CD4-positive, alpha-beta memory T cell (primary cell): ENCODE measurements at regions of chr11 and their contacts with region 1.

Region 1: DNA sequence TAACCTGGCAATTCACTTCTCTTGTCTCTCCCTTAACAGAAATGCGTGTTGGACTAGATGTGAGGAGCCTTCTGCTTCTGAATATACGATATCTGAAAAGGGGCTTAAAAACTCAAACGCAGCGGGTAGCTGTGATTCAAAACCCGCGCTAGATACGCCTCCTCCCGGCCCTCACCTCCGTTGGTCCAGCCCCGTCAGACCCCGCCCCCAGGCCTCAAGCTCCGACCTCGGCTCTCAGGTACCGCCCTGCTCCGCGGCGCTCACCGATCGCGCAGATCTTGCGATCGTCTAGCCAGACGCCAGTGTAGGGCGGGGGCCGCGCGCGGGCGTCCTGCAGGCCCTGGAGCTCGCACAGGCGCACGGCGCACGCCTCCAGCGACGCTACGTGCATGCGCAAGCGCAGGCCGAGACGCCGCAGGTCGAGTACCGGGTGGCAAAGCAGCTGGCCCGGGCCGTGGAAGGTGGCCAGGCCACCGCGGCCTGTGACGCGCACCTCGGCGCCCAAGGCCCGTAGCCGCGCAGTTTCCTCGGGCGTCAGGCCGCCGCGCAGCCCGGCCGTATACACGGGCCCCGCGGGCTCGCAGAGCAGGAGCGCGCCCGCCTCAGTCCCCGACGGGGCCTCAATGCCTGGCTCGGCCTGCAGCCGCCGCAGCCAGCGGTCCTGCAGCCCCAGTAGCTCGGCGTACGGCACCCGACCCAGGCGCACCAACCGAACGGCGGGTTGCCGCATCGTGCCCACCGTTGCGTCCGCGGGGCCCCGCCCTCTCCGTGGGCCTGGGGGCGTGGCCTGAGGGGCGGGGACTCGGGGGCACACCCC is at the start of gene LIPT2:
- DNase-seq: peak; percentile 95 to 98 (median 97)
- H3K4me3 ChIP-seq: peak within 1 kb of the TSS; percentile 39 to 84
- H3K4me3 Mint-ChIP-seq: peak within 1 kb of the TSS; percentile 87 to 93 (median 88)
- H3K27ac ChIP-seq: peak within 1 kb of the TSS; percentile 94
- H3K27ac Mint-ChIP-seq: peak within 1 kb of the TSS; percentile 73 to 96 (median 93)
- H3K4me1 ChIP-seq: peaks cover 12% of the 10 kb centered on the region
- H3K4me1 Mint-ChIP-seq: peaks cover 9 to 32% (median 20%) of the 10 kb centered on the region in 4 donors
- H3K27me3 ChIP-seq: no peaks in the 10 kb centered on the region
- H3K27me3 Mint-ChIP-seq: no peaks in the 10 kb centered on the region
- total RNA-seq, gene LIPT2: 8.0 to 15.5 TPM

Region 2: DNA sequence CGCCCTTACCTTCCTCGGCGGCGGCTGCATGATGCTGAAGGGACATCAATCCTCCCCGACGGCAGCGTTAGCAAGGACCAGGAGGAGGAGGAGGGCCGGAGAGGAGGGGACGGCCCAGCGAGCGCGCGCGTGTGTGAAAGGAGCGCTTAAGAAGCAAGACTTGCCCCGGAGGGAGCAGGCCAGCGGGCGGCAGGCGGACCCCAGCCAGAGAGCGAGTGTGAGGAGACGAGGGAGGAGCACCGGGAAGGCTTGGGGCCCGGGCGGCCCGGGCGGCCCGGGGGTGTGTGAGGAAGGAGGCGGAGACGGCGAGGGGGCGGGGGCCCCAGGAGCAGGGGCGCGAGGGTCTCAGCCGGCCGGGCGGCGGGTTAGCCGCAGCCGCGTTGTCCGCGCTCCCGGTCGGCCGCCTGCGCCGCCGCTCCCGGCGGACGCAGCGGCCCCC is 1351.3 kb before region 1 on chr11:
- CTCF ChIA-PET with region 1: no interaction called
- POLR2A ChIA-PET with region 1: no interaction called
- intact Hi-C with region 1: loop called (anchors 5 kb)
- DNase-seq: peak in 1 of 5 donors; percentile 78
- H3K4me3 ChIP-seq: peak overlapping the region; percentile 80 to 94
- H3K4me3 Mint-ChIP-seq: peak overlapping the region; percentile 92 to 98 (median 96)
- H3K27ac ChIP-seq: peak overlapping the region; percentile 97
- H3K27ac Mint-ChIP-seq: peak overlapping the region; percentile 84 to 98 (median 95)
- H3K4me1 ChIP-seq: peaks cover 49% of the 10 kb centered on the region
- H3K4me1 Mint-ChIP-seq: peaks cover 30 to 55% (median 39%) of the 10 kb centered on the region in 4 donors
- H3K27me3 ChIP-seq: no peaks in the 10 kb centered on the region
- H3K27me3 Mint-ChIP-seq: no peaks in the 10 kb centered on the region

Region 3: DNA sequence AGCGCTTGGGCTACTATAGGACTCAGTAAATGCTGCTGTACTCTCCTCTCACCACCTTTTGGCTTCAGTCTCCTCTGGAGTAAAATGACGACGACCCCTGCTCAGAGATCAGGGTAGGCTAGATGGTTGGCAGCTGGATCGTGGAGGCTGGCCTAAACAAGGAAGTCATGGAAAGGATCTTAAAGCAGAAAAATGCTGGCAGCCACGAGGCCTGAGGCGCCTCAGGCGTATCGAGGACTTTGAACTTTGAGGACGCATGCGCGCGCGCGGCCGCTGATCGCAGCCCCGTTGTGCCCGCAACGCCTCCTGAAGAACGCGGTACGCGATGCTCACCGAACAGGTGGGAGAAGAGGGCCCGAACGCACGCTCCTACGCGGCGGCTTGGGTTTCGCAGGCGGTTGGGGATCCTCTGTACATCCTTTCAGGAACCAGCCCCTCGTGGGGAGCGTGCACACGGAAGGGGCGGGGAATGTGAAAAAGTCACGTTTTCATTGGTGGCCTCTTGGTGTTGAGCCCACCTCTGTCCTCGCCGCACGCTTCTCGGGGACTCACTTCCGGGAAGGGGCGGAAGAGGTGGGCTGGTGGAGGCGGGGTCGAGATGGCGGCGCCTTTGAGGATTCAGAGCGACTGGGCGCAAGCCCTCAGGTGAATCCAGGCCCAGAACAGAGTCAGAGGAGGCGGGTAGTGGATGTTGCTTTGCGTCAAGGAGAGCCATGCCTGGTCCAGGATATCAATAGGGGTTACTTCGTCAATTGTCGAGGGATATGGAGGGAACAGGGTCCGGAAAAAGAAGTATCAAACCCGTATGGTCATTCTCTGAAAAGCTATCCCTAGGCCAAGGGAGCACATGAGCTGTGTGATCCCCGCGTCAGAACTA is 616.5 kb before region 1 on chr11 and contains the starts of genes COA4 and PAAF1:
- CTCF ChIA-PET with region 1: no interaction called
- POLR2A ChIA-PET with region 1: no interaction called
- intact Hi-C with region 1: loop called (anchors 5 kb)
- DNase-seq: peak; percentile 93 to 97 (median 94)
- H3K4me3 ChIP-seq: peak within 1 kb of the TSS; percentile 85 to 90
- H3K4me3 Mint-ChIP-seq: peak within 1 kb of the TSS; percentile 98 to 100 (median 100)
- H3K27ac ChIP-seq: peak within 1 kb of the TSS; percentile 86
- H3K27ac Mint-ChIP-seq: peak within 1 kb of the TSS; percentile 95 to 100 (median 99)
- H3K4me1 ChIP-seq: peaks cover 32% of the 10 kb centered on the region
- H3K4me1 Mint-ChIP-seq: peaks cover 16 to 50% (median 31%) of the 10 kb centered on the region in 4 donors
- H3K27me3 ChIP-seq: no peaks in the 10 kb centered on the region
- H3K27me3 Mint-ChIP-seq: no peaks in the 10 kb centered on the region
- total RNA-seq, gene COA4: 59.0 to 61.4 TPM
- total RNA-seq, gene PAAF1: 18.8 to 19.1 TPM

Region 4: GRCh38 chr11:74170694-74171629 is 322.2 kb before region 1 on chr11 and contains the starts of genes C2CD3 and PPME1:
- CTCF ChIA-PET with region 1: no interaction called
- POLR2A ChIA-PET with region 1: interaction called, 17 read pairs
- intact Hi-C with region 1: loop called (anchors 1 kb)
- DNase-seq: peak; percentile 97 to 99 (median 99)
- H3K4me3 ChIP-seq: peak within 1 kb of the TSS; percentile 74 to 86
- H3K4me3 Mint-ChIP-seq: no peak within 1 kb of the TSS
- H3K27ac ChIP-seq: peak within 1 kb of the TSS; percentile 70
- H3K27ac Mint-ChIP-seq: no peak within 1 kb of the TSS
- H3K4me1 ChIP-seq: peaks cover 40% of the 10 kb centered on the region
- H3K4me1 Mint-ChIP-seq: peaks cover 18 to 22% (median 18%) of the 10 kb centered on the region in 4 donors
- H3K27me3 ChIP-seq: no peaks in the 10 kb centered on the region
- H3K27me3 Mint-ChIP-seq: no peaks in the 10 kb centered on the region
- total RNA-seq, gene C2CD3: 41.9 to 52.7 TPM
- total RNA-seq, gene PPME1: 20.7 to 21.9 TPM

Region 5: GRCh38 chr11:74592441-74593362 is 99.5 kb after region 1 on chr11 and contains the start of gene POLD3:
- CTCF ChIA-PET with region 1: interaction called, 3 read pairs
- POLR2A ChIA-PET with region 1: interaction called, 48 read pairs
- intact Hi-C with region 1: loop called (anchors 1 kb)
- DNase-seq: peak; percentile 92 to 96 (median 94)
- H3K4me3 ChIP-seq: peak within 1 kb of the TSS; percentile 66 to 98
- H3K4me3 Mint-ChIP-seq: peak within 1 kb of the TSS; percentile 95 to 100 (median 98)
- H3K27ac ChIP-seq: peak within 1 kb of the TSS; percentile 87
- H3K27ac Mint-ChIP-seq: peak within 1 kb of the TSS; percentile 93 to 99 (median 99)
- H3K4me1 ChIP-seq: peaks cover 22% of the 10 kb centered on the region
- H3K4me1 Mint-ChIP-seq: peaks cover 17 to 33% (median 26%) of the 10 kb centered on the region in 4 donors
- H3K27me3 ChIP-seq: no peaks in the 10 kb centered on the region
- H3K27me3 Mint-ChIP-seq: no peaks in the 10 kb centered on the region
- total RNA-seq, gene POLD3: 15.0 to 16.8 TPM

Region 6: DNA sequence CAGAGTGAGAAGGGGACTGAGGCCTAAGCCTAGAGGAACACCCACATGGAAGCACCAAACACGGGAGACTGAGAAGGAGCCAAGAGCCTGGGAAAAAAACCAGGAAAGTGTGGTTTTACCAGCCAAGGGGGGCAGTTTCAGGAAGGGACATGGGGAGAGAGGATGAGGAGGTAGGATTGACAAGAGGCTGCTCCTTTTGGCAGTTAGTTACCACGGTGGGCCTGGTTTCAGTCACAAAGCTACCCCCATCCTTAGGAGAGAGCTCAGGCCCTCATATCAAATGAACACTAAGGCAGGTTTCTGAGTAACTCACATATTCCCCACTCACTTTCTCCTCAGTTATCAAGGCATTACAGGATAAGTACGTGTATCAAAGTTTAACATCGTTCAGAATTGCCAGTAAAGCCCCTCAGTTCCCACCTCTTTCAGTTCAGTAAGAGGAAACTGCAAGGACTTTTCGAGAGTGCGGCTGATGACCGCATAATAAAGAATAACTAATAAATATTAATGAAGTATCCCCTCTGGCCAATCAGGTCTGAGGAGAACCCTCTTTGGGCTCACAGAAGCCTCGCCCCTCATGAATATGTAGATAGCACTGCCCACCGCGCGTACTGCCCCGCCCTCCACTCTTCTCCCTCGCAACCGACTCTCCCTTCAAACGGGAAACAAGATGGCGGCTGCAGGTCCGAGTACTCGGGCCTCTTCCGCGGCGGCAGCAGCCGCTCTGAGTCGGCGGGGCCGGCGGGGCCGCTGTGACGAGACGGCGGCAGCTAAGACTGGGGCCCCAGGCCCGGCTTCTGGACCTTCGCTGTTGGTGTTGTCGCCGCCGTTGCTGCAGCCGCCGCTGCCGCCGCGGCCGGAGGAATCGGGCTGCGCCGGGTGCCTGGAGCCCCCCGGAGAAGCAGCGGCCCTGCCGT is 255.3 kb after region 1 on chr11 and contains the start of gene RNF169:
- CTCF ChIA-PET with region 1: no interaction called
- POLR2A ChIA-PET with region 1: no interaction called
- intact Hi-C with region 1: loop called (anchors 1 kb)
- DNase-seq: peak; percentile 88 to 95 (median 89)
- H3K4me3 ChIP-seq: peak within 1 kb of the TSS; percentile 63 to 73
- H3K4me3 Mint-ChIP-seq: peak within 1 kb of the TSS; percentile 89 to 97 (median 92)
- H3K27ac ChIP-seq: peak within 1 kb of the TSS; percentile 72
- H3K27ac Mint-ChIP-seq: peak within 1 kb of the TSS; percentile 84 to 98 (median 94)
- H3K4me1 ChIP-seq: peaks cover 38% of the 10 kb centered on the region
- H3K4me1 Mint-ChIP-seq: peaks cover 29 to 59% (median 38%) of the 10 kb centered on the region in 4 donors
- H3K27me3 ChIP-seq: no peaks in the 10 kb centered on the region
- H3K27me3 Mint-ChIP-seq: no peaks in the 10 kb centered on the region
- total RNA-seq, gene RNF169: 24.6 to 25.0 TPM

Region 7: GRCh38 chr11:74773481-74773880 is 280.3 kb after region 1 on chr11:
- CTCF ChIA-PET with region 1: no interaction called
- POLR2A ChIA-PET with region 1: no interaction called
- intact Hi-C with region 1: no loop called
- DNase-seq: no peak
- H3K4me3 ChIP-seq: no peak overlapping the region
- H3K4me3 Mint-ChIP-seq: no peak overlapping the region
- H3K27ac ChIP-seq: no peak overlapping the region
- H3K27ac Mint-ChIP-seq: peak overlapping the region in 1 of 7 donors; percentile 47
- H3K4me1 ChIP-seq: peaks cover 28% of the 10 kb centered on the region
- H3K4me1 Mint-ChIP-seq: peaks cover 37 to 61% (median 53%) of the 10 kb centered on the region in 4 donors
- H3K27me3 ChIP-seq: no peaks in the 10 kb centered on the region
- H3K27me3 Mint-ChIP-seq: no peaks in the 10 kb centered on the region